Naive thymus-derived CD8-positive, alpha-beta T cell (primary cell): ENCODE measurements at regions of chr4 and their contacts with region 1.

Region 1: DNA sequence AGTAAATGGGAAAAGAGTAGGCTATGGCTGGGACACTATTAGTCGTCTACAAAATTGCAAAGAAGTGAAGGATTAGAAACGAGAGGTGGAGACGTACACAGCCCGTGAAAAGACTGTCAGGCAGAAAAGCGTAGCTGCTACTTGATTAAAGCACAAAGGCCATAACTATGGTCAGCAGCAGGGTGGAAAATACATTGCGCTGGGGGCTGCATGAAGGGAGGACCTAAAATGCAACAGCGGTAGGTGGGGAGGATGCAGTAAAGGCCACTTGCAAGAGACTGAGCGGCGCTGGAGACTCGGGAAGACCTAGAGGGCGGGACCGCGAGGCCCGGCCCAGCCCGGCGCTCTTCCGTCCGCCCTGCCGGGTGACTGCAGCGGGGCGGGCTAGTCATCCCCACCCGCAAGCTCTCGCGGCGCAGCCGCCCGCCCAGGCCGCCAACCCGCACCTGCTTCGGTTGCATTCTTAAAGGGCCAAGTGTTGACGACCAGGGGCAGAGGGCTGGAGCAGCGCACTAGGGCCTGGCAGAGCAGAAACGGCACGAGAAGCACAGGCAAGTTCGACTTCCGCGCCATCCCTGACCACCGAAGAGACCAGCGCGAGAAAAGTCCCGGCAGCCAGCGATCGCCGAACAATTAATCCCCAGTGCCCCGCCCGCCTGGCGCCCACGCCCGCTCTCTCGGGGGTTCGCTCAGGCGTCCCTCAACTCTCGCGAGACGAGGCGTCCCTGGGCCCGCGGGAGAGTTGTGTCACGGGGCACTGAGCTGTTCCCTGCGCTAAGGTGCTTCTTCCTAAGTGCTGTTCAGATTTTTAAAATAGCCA is at the start of gene AGA:
- DNase-seq: peak; percentile 92 to 98 (median 94)
- ATAC-seq: peak; percentile 91 to 94
- H3K4me3 Mint-ChIP-seq: peak within 1 kb of the TSS; percentile 86 to 97 (median 94)
- H3K27ac Mint-ChIP-seq: peak within 1 kb of the TSS; percentile 88 to 99 (median 97)
- H3K4me1 Mint-ChIP-seq: peaks cover 26 to 43% (median 31%) of the 10 kb centered on the region in 4 donors
- H3K27me3 Mint-ChIP-seq: no peaks in the 10 kb centered on the region
- polyA plus RNA-seq, gene AGA: 38.2 to 41.5 (median 39.4) TPM

Region 2: DNA sequence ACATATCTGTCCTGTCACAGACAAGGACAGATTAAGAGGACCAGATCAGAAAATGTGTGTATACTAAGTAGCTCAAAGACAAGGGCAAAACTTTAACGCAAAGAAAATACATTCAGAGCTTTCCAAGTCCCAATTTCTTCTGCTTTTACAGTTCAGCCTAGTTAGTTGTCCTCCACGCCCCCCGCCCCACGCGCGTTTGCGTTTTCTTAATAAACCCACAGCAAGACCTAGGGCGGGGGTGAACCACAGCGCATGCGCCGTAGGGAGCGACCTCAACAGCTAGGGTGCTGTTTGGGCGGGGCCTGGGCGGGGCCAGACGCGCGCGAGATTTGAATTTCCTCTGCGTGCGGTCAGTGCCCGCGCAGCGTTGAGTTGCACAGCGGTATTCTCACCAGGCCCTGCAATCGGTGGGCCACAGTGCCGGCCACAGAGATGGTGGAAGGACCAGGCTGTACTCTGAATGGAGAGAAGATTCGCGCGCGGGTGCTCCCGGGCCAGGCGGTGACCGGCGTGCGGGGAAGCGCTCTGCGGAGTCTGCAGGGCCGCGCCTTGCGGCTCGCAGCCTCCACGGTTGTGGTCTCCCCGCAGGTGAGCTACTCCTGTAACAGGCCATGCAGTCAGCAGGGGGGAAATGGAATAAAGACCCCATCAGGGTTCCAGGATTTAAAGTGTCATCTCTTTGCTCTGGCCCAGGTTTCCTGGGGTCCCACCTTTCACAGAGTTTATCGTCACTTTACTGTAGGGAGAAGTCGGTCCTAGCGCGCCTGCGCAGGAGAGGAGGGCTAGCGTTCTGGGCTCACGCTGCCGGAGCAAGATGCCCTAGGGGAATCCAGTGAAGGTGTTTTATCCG is 132.3 kb before region 1 on chr4 and contains the start of gene NEIL3:
- POLR2A ChIA-PET with region 1: interaction called, 13 read pairs
- DNase-seq: peak; percentile 83 to 96 (median 92)
- ATAC-seq: peak; percentile 88 to 91
- H3K4me3 Mint-ChIP-seq: peak within 1 kb of the TSS; percentile 83 to 93 (median 88)
- H3K27ac Mint-ChIP-seq: peak within 1 kb of the TSS; percentile 2 to 91 (median 83)
- H3K4me1 Mint-ChIP-seq: peaks cover 1 to 24% (median 15%) of the 10 kb centered on the region in 4 donors
- H3K27me3 Mint-ChIP-seq: peaks cover 0 to 3% (median 0%) of the 10 kb centered on the region in 5 donors
- polyA plus RNA-seq, gene NEIL3: not detected

Region 3: DNA sequence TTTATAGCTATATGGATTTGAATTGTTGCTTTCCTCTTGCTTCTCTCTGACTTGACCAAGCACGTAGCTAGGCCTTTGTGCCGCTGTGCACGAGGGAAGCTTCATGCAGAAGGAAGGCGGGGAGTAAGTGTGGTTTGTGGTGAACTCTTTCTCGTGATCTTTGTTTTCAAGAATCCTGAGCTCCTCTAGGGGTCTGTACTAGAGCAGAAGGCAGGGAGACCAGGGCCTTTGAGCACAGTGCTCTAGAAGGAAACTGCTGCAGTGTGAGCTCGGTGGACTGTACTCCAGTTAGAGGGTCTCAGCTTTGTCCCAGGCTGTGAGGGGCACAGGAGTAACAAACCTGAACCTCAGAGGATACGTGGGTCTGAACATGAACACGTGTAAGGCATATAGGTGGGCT is 48.8 kb before region 1 on chr4:
- POLR2A ChIA-PET with region 1: interaction called, 39 read pairs
- DNase-seq: peak in 9 of 10 donors; percentile 10 to 74 (median 45)
- ATAC-seq: peak; percentile 96 to 98
- H3K4me3 Mint-ChIP-seq: peak overlapping the region; percentile 32 to 80 (median 68)
- H3K27ac Mint-ChIP-seq: peak overlapping the region; percentile 74 to 99 (median 95)
- H3K4me1 Mint-ChIP-seq: peaks cover 19 to 45% (median 35%) of the 10 kb centered on the region in 4 donors
- H3K27me3 Mint-ChIP-seq: no peaks in the 10 kb centered on the region